K562 (cell line): ENCODE measurements at regions of chr19 and their contacts with region 1.

Region 1: GRCh38 chr19:8321060-8321985 is at the starts of genes NDUFA7 and RPS28:
- DNase-seq: peak; percentile 92 to 97 (median 94)
- ATAC-seq: peak; percentile 90
- H3K4me3 ChIP-seq: peak within 1 kb of the TSS; percentile 99
- H3K27ac ChIP-seq: peak within 1 kb of the TSS; percentile 94
- H3K4me1 ChIP-seq: peaks cover 17 to 28% of the 10 kb centered on the region in 2 experiments
- H3K27me3 ChIP-seq: no peaks in the 10 kb centered on the region
- CTCF ChIP-seq: peak in 2 of 3 experiments; percentile 37 to 62; a peak in 3 of 6 replicates
- EP300 ChIP-seq: no peak
- POLR2A ChIP-seq: peak; percentile 97
- RAD21 ChIP-seq: peak; percentile 23 to 30; a peak in 2 of 4 replicates
- polyA plus RNA-seq, gene NDUFA7: 312 to 348 TPM
- polyA plus RNA-seq, gene RPS28: 2,724 to 2,827 TPM

Region 2: GRCh38 chr19:8261347-8262310 is 59.7 kb before region 1 on chr19:
- CTCF ChIA-PET with region 1: no interaction called
- POLR2A ChIA-PET with region 1: interaction called, 3 read pairs
- in situ Hi-C with region 1: no loop called
- intact Hi-C with region 1: loop called (anchors 10 kb)
- DNase-seq: no peak
- ATAC-seq: no peak
- H3K4me3 ChIP-seq: no peak overlapping the region
- H3K27ac ChIP-seq: no peak overlapping the region
- H3K4me1 ChIP-seq: peaks cover 9 to 37% of the 10 kb centered on the region in 2 experiments; a peak in 4 of 5 replicates
- H3K27me3 ChIP-seq: no peaks in the 10 kb centered on the region
- CTCF ChIP-seq: no peak
- EP300 ChIP-seq: no peak
- POLR2A ChIP-seq: no peak
- RAD21 ChIP-seq: no peak

Region 3: DNA sequence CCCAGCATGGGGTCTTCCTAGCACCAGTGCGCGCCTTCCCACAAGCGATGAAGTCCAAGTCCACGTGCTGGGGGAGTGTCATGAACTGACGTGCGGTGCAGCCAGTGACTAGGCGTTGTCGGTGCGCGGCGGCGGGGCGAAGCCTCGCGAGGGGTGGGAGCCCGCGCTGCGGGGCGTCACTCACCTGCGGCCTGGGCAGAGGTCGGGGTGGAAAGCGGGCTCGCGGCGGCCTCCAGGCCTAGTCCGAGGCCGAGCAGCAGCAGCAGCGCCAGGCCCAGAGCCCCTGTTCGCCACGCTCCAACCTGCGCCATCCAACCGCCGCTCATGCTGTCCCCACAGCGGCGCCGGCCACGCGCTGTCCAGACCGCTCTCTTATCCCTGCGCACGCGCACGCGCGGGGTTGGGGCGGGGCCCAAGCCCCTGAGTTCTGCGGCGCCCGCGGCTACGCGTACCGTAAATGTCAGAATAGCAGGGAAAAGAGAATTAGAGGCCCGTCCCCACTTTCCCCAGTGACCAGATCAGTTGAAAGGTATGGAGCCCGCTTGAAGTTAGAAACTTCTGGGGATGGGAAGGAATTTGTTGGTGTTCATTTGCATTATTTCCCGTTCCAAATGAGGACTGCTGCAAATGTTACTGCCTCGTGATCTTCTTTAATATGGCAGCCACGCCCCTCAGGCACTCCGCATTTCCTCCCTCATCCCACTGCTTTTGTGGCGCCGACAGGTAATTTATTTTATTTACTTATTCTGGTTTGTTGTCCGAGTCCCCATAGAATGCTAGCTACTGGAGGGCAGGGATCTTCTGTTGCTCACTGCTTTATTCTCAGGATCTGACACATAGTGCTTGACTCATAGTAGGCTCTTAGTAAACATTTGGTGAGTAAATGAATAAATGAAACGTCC is 13.1 kb before region 1 on chr19 and contains the start of gene CD320:
- CTCF ChIA-PET with region 1: no interaction called
- POLR2A ChIA-PET with region 1: interaction called, 20 read pairs
- in situ Hi-C with region 1: no loop called
- intact Hi-C with region 1: no loop called
- DNase-seq: peak; percentile 91 to 96 (median 94)
- ATAC-seq: peak; percentile 92
- H3K4me3 ChIP-seq: peak within 1 kb of the TSS; percentile 51
- H3K27ac ChIP-seq: peak within 1 kb of the TSS; percentile 85
- H3K4me1 ChIP-seq: peaks cover 28 to 63% of the 10 kb centered on the region in 2 experiments; a peak in 4 of 5 replicates
- H3K27me3 ChIP-seq: no peaks in the 10 kb centered on the region
- CTCF ChIP-seq: peak in 1 of 3 experiments; percentile 14; a peak in 1 of 6 replicates
- EP300 ChIP-seq: no peak; the same call in 1 of the 2 replicates
- POLR2A ChIP-seq: peak; percentile 90
- RAD21 ChIP-seq: no peak
- polyA plus RNA-seq, gene CD320: 0.45 to 2.5 TPM

Region 4: DNA sequence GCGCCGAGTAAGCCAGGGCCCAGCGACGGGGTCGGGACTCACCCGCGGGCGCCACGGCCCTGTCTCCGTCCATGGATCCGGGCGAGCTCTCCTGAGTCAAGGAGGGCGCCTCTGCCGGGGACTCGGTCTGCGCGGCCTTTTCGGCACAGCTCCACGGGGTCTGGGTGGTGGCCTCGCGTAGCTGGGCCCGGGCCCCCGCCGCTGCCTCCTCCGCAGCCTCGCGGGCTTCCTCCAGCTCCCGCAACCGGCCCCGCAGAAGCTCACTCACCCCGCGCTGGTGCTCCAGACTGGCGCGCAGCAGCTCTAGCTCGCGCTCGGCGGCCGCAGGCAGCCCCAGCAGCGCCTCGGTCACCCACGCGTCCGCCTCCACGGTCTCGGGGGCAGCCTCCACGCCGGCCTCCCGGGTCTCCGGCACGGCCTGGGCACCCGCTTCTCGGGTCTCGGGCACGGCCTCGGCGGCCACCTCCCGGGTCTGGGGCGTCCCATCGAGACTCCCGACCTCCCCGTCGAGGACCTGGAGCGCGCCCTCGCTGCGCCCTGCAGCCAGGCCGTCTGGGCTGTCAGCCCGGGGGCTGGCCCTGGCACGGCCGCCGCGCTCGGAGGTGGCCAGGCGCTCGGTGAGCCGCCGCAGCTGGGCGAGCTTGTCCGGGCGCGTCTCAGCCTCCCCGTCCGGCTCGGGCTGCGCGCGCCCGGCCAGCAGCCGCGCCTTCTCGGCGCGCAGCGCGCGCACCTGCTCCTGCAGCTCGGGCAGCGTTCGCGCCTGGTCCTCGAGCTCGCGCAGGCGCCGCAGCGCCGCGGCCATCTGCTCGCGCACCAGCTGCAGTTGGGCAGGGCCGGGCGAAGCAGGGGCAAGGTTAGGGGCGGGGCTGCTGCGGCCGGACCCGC is 13.4 kb after region 1 on chr19:
- CTCF ChIA-PET with region 1: no interaction called
- POLR2A ChIA-PET with region 1: interaction called, 34 read pairs
- in situ Hi-C with region 1: no loop called
- intact Hi-C with region 1: no loop called
- DNase-seq: peak in 3 of 4 experiments; percentile 54 to 77 (median 73)
- ATAC-seq: peak; percentile 65
- H3K4me3 ChIP-seq: peak overlapping the region; percentile 30; the same call in 1 of the 2 replicates
- H3K27ac ChIP-seq: no peak overlapping the region
- H3K4me1 ChIP-seq: peaks cover 0 to 34% of the 10 kb centered on the region in 2 experiments; a peak in 3 of 5 replicates
- H3K27me3 ChIP-seq: peaks cover 13 to 33% of the 10 kb centered on the region in 2 experiments; a peak in 4 of 5 replicates
- CTCF ChIP-seq: no peak
- EP300 ChIP-seq: no peak
- POLR2A ChIP-seq: no peak
- RAD21 ChIP-seq: no peak

Region 5: GRCh38 chr19:8342684-8343482 is 21.6 kb after region 1 on chr19 and contains the start of gene KANK3:
- CTCF ChIA-PET with region 1: no interaction called
- POLR2A ChIA-PET with region 1: interaction called, 14 read pairs
- in situ Hi-C with region 1: no loop called
- intact Hi-C with region 1: loop called (anchors 1 kb)
- DNase-seq: peak; percentile 98 to 100 (median 100)
- ATAC-seq: peak; percentile 100
- H3K4me3 ChIP-seq: peak within 1 kb of the TSS; percentile 23
- H3K27ac ChIP-seq: no peak within 1 kb of the TSS
- H3K4me1 ChIP-seq: peaks cover 0 to 25% of the 10 kb centered on the region in 2 experiments; a peak in 3 of 5 replicates
- H3K27me3 ChIP-seq: 0 out of 5 replicates have a peak, but pooled peaks cover 0 to 3% of the 10 kb centered on the region in 2 experiments
- CTCF ChIP-seq: peak in 1 of 3 experiments; percentile 5; a peak in 1 of 6 replicates
- EP300 ChIP-seq: no peak
- POLR2A ChIP-seq: no peak
- RAD21 ChIP-seq: no peak
- polyA plus RNA-seq, gene KANK3: 0.03 TPM in 1 of 2 experiments, not detected in the other

Region 6: DNA sequence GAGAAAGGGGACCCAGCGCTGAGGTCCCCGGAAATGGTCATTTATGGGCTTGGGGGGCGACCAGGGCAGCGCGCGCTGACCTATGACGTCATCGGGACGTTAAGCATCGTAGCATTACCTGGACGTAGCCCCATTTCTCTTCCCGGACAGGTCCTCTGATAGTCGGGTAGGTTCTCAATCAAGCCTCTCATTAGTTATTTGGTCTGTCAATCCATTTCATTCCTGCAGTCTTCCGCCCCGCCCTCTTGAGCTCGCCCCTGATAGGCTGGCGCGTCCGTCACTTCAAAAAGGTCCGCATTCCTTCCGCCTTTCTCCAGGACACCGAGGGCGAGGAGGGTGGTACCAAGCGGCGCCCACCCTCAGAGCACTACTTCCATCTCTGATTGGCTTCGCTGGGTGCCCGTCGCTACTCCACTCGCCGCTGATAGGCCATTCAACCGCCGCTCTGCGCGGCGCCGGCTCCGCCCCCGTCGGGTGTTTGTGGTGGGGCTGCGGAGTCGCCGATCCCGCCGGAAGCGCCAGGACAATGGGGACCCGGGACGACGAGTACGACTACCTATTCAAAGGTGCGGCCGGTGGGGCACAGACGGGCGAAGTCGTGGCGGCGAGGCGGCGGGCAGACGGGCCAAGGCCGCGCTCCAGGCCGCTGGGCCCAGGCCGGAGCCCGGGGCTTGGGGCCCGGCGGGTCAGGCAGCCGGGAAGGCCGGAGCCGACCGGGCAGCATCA is 68.7 kb after region 1 on chr19 and contains the start of gene RAB11B:
- CTCF ChIA-PET with region 1: no interaction called
- POLR2A ChIA-PET with region 1: interaction called, 18 read pairs
- in situ Hi-C with region 1: no loop called
- intact Hi-C with region 1: no loop called
- DNase-seq: peak; percentile 90 to 100 (median 95)
- ATAC-seq: peak; percentile 96
- H3K4me3 ChIP-seq: peak within 1 kb of the TSS; percentile 67
- H3K27ac ChIP-seq: peak within 1 kb of the TSS; percentile 94
- H3K4me1 ChIP-seq: peaks cover 17 to 37% of the 10 kb centered on the region in 2 experiments; a peak in 4 of 5 replicates
- H3K27me3 ChIP-seq: no peaks in the 10 kb centered on the region
- CTCF ChIP-seq: no peak
- EP300 ChIP-seq: peak; percentile 24; the same call in 1 of the 2 replicates
- POLR2A ChIP-seq: peak; percentile 62; the same call in 1 of the 2 replicates
- RAD21 ChIP-seq: no peak
- polyA plus RNA-seq, gene RAB11B: 0.74 to 1.0 TPM